AG04449 (cell line): ENCODE measurements at regions of chr7 and their contacts with region 1.

Region 1: DNA sequence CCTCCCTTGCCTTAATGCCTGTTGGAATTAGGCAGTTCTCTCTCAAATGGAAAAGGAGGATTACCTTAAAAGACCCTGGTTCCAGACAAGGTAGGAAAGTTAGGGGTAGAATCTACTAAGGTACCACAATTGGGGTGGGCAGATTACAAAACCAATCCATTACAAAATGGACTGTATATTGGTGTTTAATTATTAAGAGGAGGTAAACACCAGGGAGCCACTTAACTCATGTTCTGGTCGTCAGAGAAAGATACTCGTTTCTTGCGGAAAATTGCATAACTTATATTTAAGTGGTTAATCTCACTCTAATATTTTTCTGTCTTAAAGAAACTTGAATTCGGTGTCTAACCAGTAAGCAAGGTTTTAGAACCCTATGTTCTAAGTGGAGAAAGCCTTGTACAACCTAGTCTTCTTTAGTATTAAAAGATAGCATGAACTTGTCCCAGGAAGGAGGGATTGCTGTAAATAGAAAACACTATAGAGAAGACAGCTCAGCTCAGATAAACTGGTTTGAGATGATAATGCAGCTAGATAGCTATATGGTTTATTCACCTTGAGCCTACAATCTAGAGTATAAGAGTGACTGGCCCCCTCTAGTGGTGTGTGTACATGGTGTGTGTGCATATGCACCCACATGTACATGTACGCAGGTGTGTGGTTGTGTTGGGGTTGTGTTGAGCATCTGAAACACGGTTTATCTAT is 58.0 kb upstream of the STRIP2 start:
- DNase-seq: no peak
- H3K4me3 ChIP-seq: no peak overlapping the region
- CTCF ChIP-seq: peak; percentile 47

Region 2: DNA sequence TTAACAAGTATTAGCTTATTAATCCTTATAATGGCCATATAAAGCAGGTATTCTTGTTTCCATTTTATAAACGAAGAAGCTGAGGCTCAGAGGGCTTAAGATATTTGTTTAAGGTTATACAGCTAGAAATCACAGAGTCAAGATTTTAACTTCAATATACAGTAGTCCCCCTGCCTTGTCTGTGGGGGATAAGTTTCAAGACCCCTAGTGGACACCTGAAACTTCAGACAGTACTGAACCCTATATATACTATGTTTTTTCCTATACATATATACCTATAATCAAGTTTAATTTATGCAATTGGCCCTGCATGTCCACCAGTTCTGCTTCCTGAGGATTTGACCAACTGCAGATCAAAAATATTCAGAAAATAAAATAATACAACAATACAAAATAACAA is 13.6 kb after region 1 on chr7:
- CTCF ChIA-PET with region 1: interaction called, 65 read pairs
- POLR2A ChIA-PET with region 1: no interaction called
- DNase-seq: no peak
- H3K4me3 ChIP-seq: no peak overlapping the region
- CTCF ChIP-seq: no peak